Activated CD8-positive, alpha-beta T cell treated with anti-CD3 and anti-CD28 coated beads, Interleukin-2, amount 10 ng/mL, durations not matched to agents 7 days and 5 days (primary cell): ENCODE measurements at regions of chr6 and their contacts with region 1.

Region 1: DNA sequence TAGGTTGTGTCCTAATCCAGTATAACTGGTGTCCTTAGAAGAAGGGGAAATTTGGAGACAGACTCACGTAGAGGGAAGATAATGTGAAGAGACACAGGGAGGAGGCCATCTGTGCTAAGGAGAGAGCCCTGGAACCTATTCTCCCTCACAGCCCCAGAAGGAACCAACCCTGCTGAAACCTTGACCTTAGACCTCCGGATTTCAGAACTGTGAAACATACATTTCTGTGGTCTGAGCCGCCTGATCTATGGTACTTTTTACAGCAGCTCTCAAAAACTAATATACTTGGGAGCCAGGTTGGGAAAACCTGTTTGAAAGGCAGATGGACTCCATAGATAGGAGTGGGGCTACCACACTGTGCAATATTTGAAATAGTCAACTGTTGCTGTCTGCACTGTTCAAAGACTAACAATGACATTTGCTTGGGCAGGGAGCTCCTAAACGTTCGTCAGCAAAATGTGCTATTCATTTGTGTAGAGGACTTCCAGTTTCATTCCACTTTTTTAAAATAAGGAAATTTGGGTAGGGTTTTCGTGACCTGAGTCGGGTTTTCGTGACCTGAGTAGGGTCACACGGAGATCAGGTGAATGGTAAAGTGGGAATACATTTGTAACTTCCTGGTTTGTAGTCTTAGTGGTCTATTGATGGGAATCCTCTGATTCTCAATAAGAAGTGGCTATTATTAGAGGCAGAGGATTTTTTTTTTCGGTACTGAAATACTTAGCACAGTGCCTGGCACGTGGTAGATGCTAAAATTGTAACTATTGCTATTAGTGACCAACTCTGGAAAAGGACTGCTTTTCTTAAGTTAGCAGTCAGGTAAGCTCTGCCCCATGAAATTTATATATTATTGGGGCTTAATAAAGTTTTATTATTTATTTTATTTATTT is 11.4 kb downstream of the TAGAP start:
- DNase-seq: no peak
- ATAC-seq: peak; percentile 28
- H3K4me3 Mint-ChIP-seq: no peak overlapping the region
- H3K27ac Mint-ChIP-seq: no peak overlapping the region
- H3K4me1 Mint-ChIP-seq: peaks cover 22% of the 10 kb centered on the region
- H3K27me3 Mint-ChIP-seq: no peaks in the 10 kb centered on the region

Region 2: GRCh38 chr6:159017757-159018559 is 15.4 kb before region 1 on chr6:
- CTCF ChIA-PET with region 1: interaction called, 17 read pairs
- POLR2A ChIA-PET with region 1: interaction called, 5 read pairs
- DNase-seq: peak; percentile 12
- ATAC-seq: peak; percentile 71
- H3K4me3 Mint-ChIP-seq: no peak overlapping the region
- H3K27ac Mint-ChIP-seq: peak overlapping the region; percentile 52
- H3K4me1 Mint-ChIP-seq: peaks cover 29% of the 10 kb centered on the region
- H3K27me3 Mint-ChIP-seq: no peaks in the 10 kb centered on the region

Region 3: DNA sequence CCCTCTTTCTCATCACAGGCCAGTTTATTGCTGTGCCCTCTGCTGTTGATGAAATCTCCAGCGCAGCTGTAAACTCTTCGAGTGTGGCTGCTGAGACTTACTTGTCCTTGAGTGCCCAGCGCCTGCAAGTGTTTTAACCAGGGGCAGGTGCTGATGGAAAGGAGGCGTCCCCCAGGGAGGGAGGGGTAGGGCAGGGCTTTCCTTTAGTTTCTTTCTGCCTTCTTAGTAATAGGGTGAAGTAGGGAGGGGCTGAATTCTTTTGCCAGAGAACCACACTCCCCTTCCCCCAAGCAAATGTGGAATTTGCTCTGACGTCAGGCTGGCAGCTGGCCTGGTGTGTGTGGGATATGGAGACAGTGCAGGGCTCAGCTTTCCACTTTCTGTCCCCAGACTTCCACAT is 996.7 kb after region 1 on chr6:
- CTCF ChIA-PET with region 1: no interaction called
- POLR2A ChIA-PET with region 1: no interaction called
- DNase-seq: no peak
- ATAC-seq: no peak
- H3K4me3 Mint-ChIP-seq: no peak overlapping the region
- H3K27ac Mint-ChIP-seq: no peak overlapping the region
- H3K4me1 Mint-ChIP-seq: peaks cover 20% of the 10 kb centered on the region
- H3K27me3 Mint-ChIP-seq: no peaks in the 10 kb centered on the region